Activated CD4-positive, alpha-beta memory T cell treated with anti-CD3 and anti-CD28 coated beads for 36 hours (primary cell): ENCODE measurements at regions of chr15 and their contacts with region 1.

Region 1: GRCh38 chr15:39920510-39921273 is 626 bp upstream of the GPR176 start:
- DNase-seq: peak; percentile 90
- H3K4me3 Mint-ChIP-seq: peak overlapping the region; percentile 81
- H3K27ac Mint-ChIP-seq: peak overlapping the region; percentile 56
- H3K4me1 Mint-ChIP-seq: peaks cover 18% of the 10 kb centered on the region
- H3K27me3 Mint-ChIP-seq: peaks cover 20% of the 10 kb centered on the region

Region 2: DNA sequence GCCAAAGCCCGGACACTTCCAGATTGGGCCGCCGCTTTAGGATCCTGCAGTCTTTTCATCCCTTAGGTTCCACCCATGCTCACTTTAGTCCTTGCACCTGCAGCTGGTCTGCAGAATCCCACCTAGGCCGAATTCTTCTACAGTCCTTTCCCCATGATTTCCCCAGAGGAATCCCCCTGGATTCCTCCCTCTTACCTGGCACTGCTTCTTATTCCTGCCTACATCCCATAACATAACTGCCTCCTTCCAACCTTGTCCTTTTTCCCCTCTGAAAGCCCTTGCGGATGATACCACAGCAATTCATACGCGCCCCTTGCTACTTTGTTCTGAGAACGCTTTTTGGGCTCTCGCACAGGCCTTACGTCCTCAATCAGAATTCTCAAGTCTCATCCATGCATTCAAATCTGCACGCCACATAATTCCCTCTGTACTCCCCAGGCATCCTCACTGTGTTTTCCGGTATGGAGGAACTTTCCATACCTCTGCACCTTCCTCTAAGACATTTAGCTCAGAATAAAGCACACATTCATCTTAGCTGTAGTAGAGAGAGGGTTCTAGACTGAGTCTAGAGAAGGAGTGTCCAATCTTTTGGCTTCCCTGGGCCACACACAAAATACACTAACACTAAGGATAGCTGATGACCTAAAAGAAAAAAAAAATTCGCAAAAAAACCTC is 13.8 kb after region 1 on chr15:
- CTCF ChIA-PET with region 1: interaction called, 5 read pairs
- POLR2A ChIA-PET with region 1: interaction called, 3 read pairs
- intact Hi-C with region 1: loop called (anchors 1 kb)
- DNase-seq: no peak
- H3K4me3 Mint-ChIP-seq: peak overlapping the region; percentile 84
- H3K27ac Mint-ChIP-seq: peak overlapping the region; percentile 19
- H3K4me1 Mint-ChIP-seq: peaks cover 34% of the 10 kb centered on the region
- H3K27me3 Mint-ChIP-seq: peaks cover 1% of the 10 kb centered on the region

Region 3: DNA sequence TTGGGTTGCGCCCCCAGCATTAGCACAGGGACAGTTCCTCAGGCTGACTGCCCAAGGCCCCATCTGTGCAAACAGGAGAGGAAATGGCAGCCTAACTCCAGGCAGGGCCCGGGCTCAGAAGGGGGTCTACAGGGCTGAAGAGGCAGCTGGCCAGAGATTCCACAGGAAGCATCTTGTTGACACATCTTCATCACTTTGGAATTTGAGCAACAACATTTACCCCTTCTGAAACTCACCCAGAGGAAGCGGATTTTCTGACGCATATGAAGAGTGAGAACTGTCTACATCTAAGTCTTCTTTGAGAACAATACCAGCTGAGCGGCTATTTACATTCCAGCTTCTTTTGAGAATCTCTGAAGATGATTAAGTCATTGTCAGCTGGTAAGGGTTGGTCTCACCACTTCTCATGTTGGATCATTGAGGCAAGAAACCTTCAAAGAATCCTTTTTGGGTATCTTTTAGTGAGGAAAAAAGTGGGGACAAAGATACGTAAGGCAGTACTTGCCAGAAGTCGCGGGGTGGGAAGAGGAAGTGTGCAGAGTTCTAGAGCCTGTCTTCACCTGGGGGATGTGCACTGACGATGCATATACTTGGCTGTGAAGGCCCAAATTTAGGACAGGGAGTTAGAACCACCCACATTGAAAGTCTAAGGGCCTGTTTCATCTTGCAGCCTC is 143.7 kb after region 1 on chr15:
- CTCF ChIA-PET with region 1: no interaction called
- POLR2A ChIA-PET with region 1: no interaction called
- intact Hi-C with region 1: no loop called
- DNase-seq: no peak
- H3K4me3 Mint-ChIP-seq: no peak overlapping the region
- H3K27ac Mint-ChIP-seq: peak overlapping the region; percentile 19
- H3K4me1 Mint-ChIP-seq: peaks cover 17% of the 10 kb centered on the region
- H3K27me3 Mint-ChIP-seq: no peaks in the 10 kb centered on the region

Region 4: GRCh38 chr15:40160689-40161688 is 240.3 kb after region 1 on chr15 and contains the start of gene BUB1B:
- CTCF ChIA-PET with region 1: no interaction called
- POLR2A ChIA-PET with region 1: no interaction called
- intact Hi-C with region 1: loop called (anchors 2 kb)
- DNase-seq: peak; percentile 96
- H3K4me3 Mint-ChIP-seq: no peak within 1 kb of the TSS
- H3K27ac Mint-ChIP-seq: no peak within 1 kb of the TSS
- H3K4me1 Mint-ChIP-seq: peaks cover 6% of the 10 kb centered on the region
- H3K27me3 Mint-ChIP-seq: no peaks in the 10 kb centered on the region
- total RNA-seq, gene BUB1B: 88.8 to 96.1 TPM